Motor neuron (in vitro differentiated cells): ENCODE measurements at regions of chrX and their contacts with region 1.

Region 1: GRCh38 chrX:19382555-19383145 is 38.9 kb downstream of the PDHA1 start:
- ATAC-seq: peak in 7 of 8 experiments; percentile 43 to 85 (median 53)
- H3K4me3 ChIP-seq: no peak overlapping the region
- H3K27ac ChIP-seq: no peak overlapping the region
- H3K4me1 ChIP-seq: no peaks in the 10 kb centered on the region

Region 2: GRCh38 chrX:19514791-19515614 is 132.4 kb after region 1 on chrX and contains the start of gene MAP3K15:
- in situ Hi-C with region 1: loop called in 2 of 9 experiments (anchors 25 kb)
- ATAC-seq: peak; percentile 61 to 90 (median 74)
- H3K4me3 ChIP-seq: peak within 1 kb of the TSS; percentile 31 to 44 (median 40)
- H3K27ac ChIP-seq: no peak within 1 kb of the TSS
- H3K4me1 ChIP-seq: peaks cover 0 to 3% of the 10 kb centered on the region in 2 donors
- total RNA-seq, gene MAP3K15: 0.14 to 0.81 (median 0.43) TPM in 7 of 8 experiments, not detected in the other

Region 3: GRCh38 chrX:19544693-19545305 is 162.1 kb after region 1 on chrX:
- in situ Hi-C with region 1: loop called in 1 of 9 experiments (anchors 25 kb)
- ATAC-seq: peak in 7 of 8 experiments; percentile 48 to 72 (median 59)
- H3K4me3 ChIP-seq: no peak overlapping the region
- H3K27ac ChIP-seq: no peak overlapping the region
- H3K4me1 ChIP-seq: no peaks in the 10 kb centered on the region

Region 4: DNA sequence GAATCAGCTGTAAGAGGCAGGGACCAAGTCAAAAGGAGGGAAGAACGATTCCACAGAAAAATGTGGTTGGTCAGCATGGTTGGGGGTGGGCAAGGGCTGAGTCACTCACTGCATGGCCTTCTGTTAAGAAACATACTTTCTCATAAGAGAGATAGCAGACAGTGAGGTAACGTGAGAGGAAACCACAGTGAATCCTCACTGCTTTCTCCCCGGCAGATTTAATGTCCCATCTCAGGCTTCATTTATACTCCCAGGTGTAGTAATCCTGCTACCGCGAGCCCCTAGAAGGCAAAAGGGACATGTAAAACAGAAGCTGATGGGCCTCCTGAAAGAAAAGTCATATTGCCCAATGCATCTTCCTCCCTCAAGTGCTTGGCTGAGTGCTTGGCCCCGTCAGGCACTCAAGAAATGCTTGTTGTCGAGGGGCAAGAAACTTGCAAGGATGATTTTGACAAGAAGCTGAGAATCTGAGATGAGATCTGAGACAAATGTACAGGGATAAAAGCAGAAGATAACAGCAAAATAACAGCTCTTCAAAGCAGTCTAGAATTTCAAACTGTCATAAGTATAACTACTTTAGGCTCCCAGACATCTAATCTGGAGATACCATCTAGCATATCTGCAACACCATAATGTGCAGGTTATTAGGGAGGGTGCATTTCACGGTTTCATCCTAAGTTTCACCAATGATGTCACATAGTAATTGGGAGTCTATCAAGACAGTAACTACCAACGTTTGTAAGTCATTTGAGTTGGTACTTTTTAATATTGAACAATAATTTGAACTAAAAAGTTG is 464.5 kb after region 1 on chrX:
- in situ Hi-C with region 1: no loop called
- ATAC-seq: peak in 7 of 8 experiments; percentile 61 to 87 (median 71)
- H3K4me3 ChIP-seq: no peak overlapping the region
- H3K27ac ChIP-seq: no peak overlapping the region
- H3K4me1 ChIP-seq: no peaks in the 10 kb centered on the region